Activated CD4-positive, alpha-beta memory T cell treated with anti-CD3 and anti-CD28 coated beads, Interleukin-2, amount 10 ng/mL, durations not matched to agents 7 days and 5 days (primary cell): ENCODE measurements at regions of chr5 and their contacts with region 1.

Region 1: DNA sequence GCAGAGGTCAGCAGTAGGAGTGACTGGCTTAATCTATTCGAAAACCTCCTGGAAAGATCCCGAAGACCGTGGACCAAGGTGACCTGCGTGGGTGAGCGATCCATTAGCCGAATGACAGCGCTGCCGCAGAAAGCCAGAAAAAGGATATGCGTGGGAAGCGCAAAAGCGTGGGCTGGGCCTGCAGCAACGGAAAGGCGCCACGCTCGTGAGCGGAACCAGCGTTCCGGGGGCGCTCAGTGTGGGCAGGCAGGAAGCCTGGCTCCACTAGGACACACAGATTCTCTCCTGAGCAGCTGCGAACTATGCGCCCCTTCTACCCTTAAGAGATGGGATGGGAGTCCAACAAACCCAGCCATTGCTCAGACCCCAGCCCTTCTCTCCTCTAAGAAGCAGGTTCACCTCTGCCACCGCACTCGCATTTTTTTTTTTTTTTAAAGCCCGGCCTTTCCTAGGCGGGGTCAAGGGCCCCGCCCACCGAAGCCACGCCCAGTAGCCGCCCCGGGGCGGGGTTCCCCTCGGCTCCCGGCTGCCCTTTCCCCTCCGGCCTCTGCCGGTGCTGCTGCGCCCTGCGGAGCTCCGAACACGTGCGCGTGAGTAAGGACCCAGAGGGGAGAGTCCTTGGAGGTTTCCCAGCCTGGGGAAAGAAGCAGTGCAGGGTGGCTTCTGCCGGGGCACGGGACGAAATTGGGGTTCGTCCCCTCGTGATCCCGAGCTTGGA is 19.8 kb upstream of the MATR3 start:
- DNase-seq: peak; percentile 91
- H3K4me3 Mint-ChIP-seq: peak overlapping the region; percentile 85
- H3K27ac Mint-ChIP-seq: peak overlapping the region; percentile 81
- H3K4me1 Mint-ChIP-seq: peaks cover 60% of the 10 kb centered on the region
- H3K27me3 Mint-ChIP-seq: peaks cover 4% of the 10 kb centered on the region

Region 2: DNA sequence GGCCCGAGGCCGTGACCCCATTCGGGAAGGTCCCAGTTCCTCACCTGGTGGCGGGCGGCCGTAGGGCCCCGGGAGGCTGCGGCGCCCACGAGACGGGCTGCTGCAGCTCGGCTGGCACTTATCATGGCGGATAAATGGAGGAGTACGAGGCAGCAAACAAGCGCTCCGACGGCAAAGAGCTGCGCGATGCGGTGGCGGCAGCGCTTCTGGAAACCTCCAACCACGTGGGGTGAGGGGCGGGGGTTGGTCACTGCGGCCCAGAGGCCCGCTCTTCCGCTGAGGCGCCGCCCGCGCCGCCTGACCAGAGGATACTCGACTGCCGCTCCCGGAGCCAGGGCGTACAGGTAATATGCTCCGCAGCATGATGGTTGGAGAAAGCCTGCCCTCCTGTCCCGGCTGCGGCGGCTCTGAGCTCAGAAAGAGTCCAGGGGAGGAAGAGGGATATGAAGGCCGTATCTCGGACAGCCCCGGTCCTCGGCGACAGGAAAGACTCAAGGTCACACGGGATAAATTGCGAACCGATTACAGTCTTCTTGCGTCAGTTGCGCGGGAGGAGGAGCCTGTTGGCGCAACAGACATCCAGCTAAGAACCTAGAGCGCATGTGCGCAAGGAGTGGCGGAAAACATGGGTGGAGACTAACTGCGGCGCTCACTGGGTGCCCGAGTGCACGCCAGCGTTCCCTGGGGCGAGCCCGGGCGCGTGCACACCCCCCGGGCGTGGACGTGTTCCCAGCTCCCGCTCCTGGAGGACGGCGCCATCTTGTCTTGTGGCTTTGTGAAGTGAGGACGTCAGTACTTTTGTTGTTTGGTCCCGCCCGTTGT is 698.3 kb before region 1 on chr5 and contains the start of gene HSPA9:
- CTCF ChIA-PET with region 1: interaction called, 6 read pairs
- POLR2A ChIA-PET with region 1: interaction called, 16 read pairs
- DNase-seq: peak; percentile 98
- H3K4me3 Mint-ChIP-seq: peak within 1 kb of the TSS; percentile 92
- H3K27ac Mint-ChIP-seq: peak within 1 kb of the TSS; percentile 97
- H3K4me1 Mint-ChIP-seq: peaks cover 48% of the 10 kb centered on the region
- H3K27me3 Mint-ChIP-seq: no peaks in the 10 kb centered on the region
- total RNA-seq, gene HSPA9: 205 to 217 TPM

Region 3: GRCh38 chr5:139043157-139043905 is 230.4 kb before region 1 on chr5:
- CTCF ChIA-PET with region 1: no interaction called
- POLR2A ChIA-PET with region 1: no interaction called
- DNase-seq: no peak
- H3K4me3 Mint-ChIP-seq: no peak overlapping the region
- H3K27ac Mint-ChIP-seq: no peak overlapping the region
- H3K4me1 Mint-ChIP-seq: no peaks in the 10 kb centered on the region
- H3K27me3 Mint-ChIP-seq: no peaks in the 10 kb centered on the region

Region 4: GRCh38 chr5:139210585-139210984 is 63.1 kb before region 1 on chr5:
- CTCF ChIA-PET with region 1: no interaction called
- POLR2A ChIA-PET with region 1: no interaction called
- DNase-seq: no peak
- H3K4me3 Mint-ChIP-seq: no peak overlapping the region
- H3K27ac Mint-ChIP-seq: no peak overlapping the region
- H3K4me1 Mint-ChIP-seq: no peaks in the 10 kb centered on the region
- H3K27me3 Mint-ChIP-seq: peaks cover 4% of the 10 kb centered on the region

Region 5: GRCh38 chr5:139301808-139302499 is 28.2 kb after region 1 on chr5:
- CTCF ChIA-PET with region 1: interaction called, 4 read pairs
- POLR2A ChIA-PET with region 1: interaction called, 175 read pairs
- DNase-seq: no peak
- H3K4me3 Mint-ChIP-seq: peak overlapping the region; percentile 4
- H3K27ac Mint-ChIP-seq: peak overlapping the region; percentile 16
- H3K4me1 Mint-ChIP-seq: peaks cover 88% of the 10 kb centered on the region
- H3K27me3 Mint-ChIP-seq: no peaks in the 10 kb centered on the region

Region 6: DNA sequence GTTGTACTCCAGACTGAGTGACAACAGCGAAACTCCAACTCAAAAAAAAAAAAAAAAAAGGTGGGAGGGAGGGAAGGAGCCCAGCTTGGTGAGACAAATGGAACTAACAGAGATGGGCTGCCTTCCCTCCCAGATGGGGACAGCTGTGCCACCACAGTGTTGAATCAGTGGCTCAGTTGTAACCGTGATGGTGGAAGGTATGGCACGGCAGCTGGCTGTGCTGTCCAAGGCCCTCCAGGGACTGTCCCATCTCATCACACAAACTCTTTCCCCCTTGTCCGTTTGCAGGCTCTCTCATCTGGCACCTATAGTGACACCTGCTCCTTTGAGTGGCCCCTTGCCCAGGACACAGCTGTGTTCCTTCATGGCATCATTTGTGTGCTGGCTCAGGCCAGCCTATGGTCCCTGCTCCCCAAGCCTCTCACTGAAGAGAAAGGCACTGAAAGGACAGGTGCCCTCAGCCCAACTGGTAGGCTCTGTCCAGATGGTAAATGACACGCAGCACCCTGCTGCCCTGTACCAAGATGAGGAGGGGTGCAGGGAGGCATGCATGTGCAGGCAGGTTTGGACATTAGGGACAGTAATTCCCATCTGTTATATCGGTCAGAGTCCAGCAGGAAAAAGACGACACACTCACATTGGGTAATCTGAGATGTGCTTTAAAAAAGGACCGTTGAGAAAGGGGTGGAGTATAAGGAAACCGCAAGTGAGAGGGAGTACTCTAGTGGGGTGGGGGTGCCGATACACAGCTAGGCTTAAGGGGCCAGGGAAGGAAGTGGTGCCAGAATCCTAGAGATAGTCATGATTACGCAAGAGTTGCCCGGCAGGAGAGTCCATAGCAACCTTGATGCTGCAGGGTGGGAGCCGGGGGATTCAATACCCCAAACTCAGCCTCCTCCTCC is 201.4 kb after region 1 on chr5:
- CTCF ChIA-PET with region 1: no interaction called
- POLR2A ChIA-PET with region 1: no interaction called
- DNase-seq: no peak
- H3K4me3 Mint-ChIP-seq: peak overlapping the region; percentile 3
- H3K27ac Mint-ChIP-seq: peak overlapping the region; percentile 80
- H3K4me1 Mint-ChIP-seq: peaks cover 88% of the 10 kb centered on the region
- H3K27me3 Mint-ChIP-seq: no peaks in the 10 kb centered on the region